AG04449 (cell line): ENCODE measurements at regions of chr9 and their contacts with region 1.

Region 1: DNA sequence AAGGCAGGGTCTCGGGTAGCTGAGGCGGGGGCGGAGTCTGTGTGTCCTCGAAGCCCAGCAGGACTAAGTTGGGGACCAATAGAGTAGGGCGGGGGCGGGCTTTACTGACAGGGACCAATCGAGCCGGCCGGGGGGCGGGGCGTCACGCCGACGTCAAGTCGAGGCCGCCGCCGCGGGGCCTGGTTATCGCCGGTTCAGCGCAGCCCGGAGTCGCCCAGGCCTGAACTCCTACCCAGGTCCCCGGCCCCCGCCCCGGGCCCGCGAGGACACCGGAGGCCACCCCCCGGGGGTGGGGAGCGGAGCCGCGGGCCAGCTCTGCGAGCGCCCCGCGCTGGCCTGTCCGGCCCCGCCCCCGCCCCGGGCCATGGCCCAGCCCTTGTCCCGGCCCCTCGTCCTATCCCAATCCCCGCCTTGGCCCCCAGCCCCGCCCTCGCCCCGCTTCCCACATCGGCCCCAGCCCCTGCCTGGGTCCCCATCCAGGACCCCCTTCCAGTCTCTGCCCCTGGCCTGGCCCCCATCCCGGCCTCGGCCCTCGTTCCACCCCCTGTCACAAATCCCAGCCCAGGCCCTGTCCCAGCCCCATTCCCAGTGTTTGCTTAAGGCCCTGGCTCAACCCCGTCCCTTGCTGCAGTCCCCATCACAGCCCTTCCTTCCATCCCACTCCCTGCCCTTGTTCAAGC is at the start of gene TMEM8B:
- DNase-seq: no peak
- H3K4me3 ChIP-seq: peak within 1 kb of the TSS; percentile 69
- CTCF ChIP-seq: no peak

Region 2: GRCh38 chr9:35518226-35518821 is 310.9 kb before region 1 on chr9:
- CTCF ChIA-PET with region 1: no interaction called
- POLR2A ChIA-PET with region 1: no interaction called
- DNase-seq: peak; percentile 81
- H3K4me3 ChIP-seq: no peak overlapping the region
- CTCF ChIP-seq: no peak

Region 3: GRCh38 chr9:35814841-35815543 is 14.2 kb before region 1 on chr9 and contains the start of gene HINT2:
- CTCF ChIA-PET with region 1: interaction called, 82 read pairs
- POLR2A ChIA-PET with region 1: no interaction called
- DNase-seq: peak; percentile 94
- H3K4me3 ChIP-seq: peak within 1 kb of the TSS; percentile 87
- CTCF ChIP-seq: no peak

Region 4: GRCh38 chr9:35859310-35859989 is 30.2 kb after region 1 on chr9:
- CTCF ChIA-PET with region 1: interaction called, 11 read pairs
- POLR2A ChIA-PET with region 1: no interaction called
- DNase-seq: no peak
- H3K4me3 ChIP-seq: no peak overlapping the region
- CTCF ChIP-seq: no peak

Region 5: GRCh38 chr9:35910613-35911359 is 81.6 kb after region 1 on chr9:
- CTCF ChIA-PET with region 1: interaction called, 35 read pairs
- POLR2A ChIA-PET with region 1: no interaction called
- DNase-seq: no peak
- H3K4me3 ChIP-seq: no peak overlapping the region
- CTCF ChIP-seq: peak; percentile 41

Region 6: DNA sequence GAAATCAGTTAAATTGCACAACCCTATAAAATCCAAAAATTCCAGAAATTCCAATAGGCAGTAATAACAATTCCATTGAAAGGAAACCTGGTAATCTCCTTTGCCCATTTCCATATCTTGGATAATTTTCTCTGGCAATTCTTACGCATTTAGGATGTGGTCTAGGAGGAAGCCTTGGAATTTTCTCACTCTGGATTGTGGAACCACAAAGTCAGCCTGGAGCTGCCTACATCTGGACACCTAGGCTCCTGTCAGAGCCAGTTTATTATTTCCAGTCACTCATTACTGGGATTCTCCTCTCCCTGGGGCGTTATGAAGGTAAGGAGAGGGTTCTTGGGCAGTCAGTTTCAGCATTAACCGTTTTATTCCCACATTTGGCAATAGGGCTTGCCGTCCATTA is 469.4 kb after region 1 on chr9:
- CTCF ChIA-PET with region 1: no interaction called
- POLR2A ChIA-PET with region 1: no interaction called
- DNase-seq: no peak
- H3K4me3 ChIP-seq: no peak overlapping the region
- CTCF ChIP-seq: no peak